Caco-2 (cell line): ENCODE measurements at regions of chr11 and their contacts with region 1.

Region 1: GRCh38 chr11:118689851-118690552 is 10.6 kb upstream of the TREH start:
- DNase-seq: peak; percentile 92 to 96
- H3K4me3 ChIP-seq: peak overlapping the region; percentile 25
- H3K4me3 Mint-ChIP-seq: peak overlapping the region; percentile 74
- H3K27ac Mint-ChIP-seq: peak overlapping the region; percentile 80
- H3K4me1 ChIP-seq: peaks cover 14% of the 10 kb centered on the region
- H3K4me1 Mint-ChIP-seq: peaks cover 23% of the 10 kb centered on the region
- H3K27me3 ChIP-seq: no peaks in the 10 kb centered on the region
- H3K27me3 Mint-ChIP-seq: no peaks in the 10 kb centered on the region
- CTCF ChIP-seq: peak; percentile 88 to 100

Region 2: GRCh38 chr11:118522571-118523072 is 167.4 kb before region 1 on chr11:
- CTCF ChIA-PET with region 1: no interaction called
- POLR2A ChIA-PET with region 1: no interaction called
- intact Hi-C with region 1: no loop called
- DNase-seq: peak; percentile 75 to 81
- H3K4me3 ChIP-seq: no peak overlapping the region
- H3K4me3 Mint-ChIP-seq: no peak overlapping the region
- H3K27ac Mint-ChIP-seq: peak overlapping the region; percentile 26
- H3K4me1 ChIP-seq: 0 out of 2 replicates have a peak, but pooled peaks cover 5% of the 10 kb centered on the region
- H3K4me1 Mint-ChIP-seq: peaks cover 7% of the 10 kb centered on the region
- H3K27me3 ChIP-seq: no peaks in the 10 kb centered on the region
- H3K27me3 Mint-ChIP-seq: no peaks in the 10 kb centered on the region
- CTCF ChIP-seq: peak; percentile 87 to 90

Region 3: DNA sequence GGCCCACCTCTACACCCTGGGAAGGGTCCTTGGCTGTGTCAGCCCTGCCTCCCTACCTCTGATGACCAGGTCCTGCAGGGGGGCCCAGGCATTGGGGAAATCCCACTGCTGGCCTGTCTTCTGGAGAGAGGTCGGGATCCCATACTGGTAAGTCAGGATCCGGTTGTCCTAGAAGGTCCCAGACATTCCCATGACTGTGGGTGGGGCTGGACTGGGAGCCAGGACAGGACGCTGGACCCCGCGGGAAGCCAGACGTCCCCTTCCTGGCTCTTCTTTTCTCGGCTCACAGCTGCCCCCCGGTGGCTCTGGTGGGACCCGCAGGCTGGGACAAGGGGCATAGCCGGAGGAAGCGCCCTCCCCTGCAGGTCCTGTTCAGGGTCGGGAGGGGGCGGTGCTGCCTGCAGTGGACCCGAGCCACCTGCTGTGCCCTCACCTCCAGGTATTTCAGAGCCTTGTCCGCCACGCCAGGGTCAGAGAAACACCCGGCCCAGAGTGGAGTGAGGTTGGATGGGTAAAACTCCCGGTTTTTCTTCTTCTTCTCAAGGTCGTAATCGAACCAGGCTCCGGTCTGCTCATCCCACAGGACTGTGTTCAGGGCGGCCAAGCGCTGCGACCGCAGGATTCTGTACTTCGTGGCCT is 30.6 kb before region 1 on chr11:
- CTCF ChIA-PET with region 1: interaction called, 14 read pairs
- POLR2A ChIA-PET with region 1: no interaction called
- intact Hi-C with region 1: no loop called
- DNase-seq: peak; percentile 97 to 99
- H3K4me3 ChIP-seq: no peak overlapping the region
- H3K4me3 Mint-ChIP-seq: no peak overlapping the region
- H3K27ac Mint-ChIP-seq: peak overlapping the region; percentile 43
- H3K4me1 ChIP-seq: peaks cover 37% of the 10 kb centered on the region
- H3K4me1 Mint-ChIP-seq: peaks cover 11% of the 10 kb centered on the region
- H3K27me3 ChIP-seq: no peaks in the 10 kb centered on the region
- H3K27me3 Mint-ChIP-seq: no peaks in the 10 kb centered on the region
- CTCF ChIP-seq: peak; percentile 100

Region 4: DNA sequence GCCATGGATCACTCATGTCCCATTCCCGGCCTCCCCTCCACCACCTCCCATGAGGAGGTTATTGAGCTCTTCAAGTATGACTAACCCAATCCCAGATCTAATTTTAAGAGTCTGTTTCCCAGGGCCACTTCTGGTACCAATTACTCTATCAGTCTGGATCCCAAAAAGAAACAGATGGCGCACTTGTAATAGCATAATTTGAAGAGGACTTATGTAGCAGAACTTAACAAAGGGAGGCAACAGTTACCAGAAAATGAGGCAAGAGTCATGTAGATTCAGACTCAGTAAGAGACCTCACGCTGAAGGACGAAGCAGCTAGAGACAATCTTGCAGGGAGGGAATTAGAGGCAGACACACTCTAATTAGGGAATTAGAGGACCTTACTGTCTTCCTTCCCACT is 54.0 kb after region 1 on chr11:
- CTCF ChIA-PET with region 1: interaction called, 4 read pairs
- POLR2A ChIA-PET with region 1: interaction called, 5 read pairs
- intact Hi-C with region 1: loop called (anchors 5 kb)
- DNase-seq: no peak
- H3K4me3 ChIP-seq: no peak overlapping the region
- H3K4me3 Mint-ChIP-seq: no peak overlapping the region
- H3K27ac Mint-ChIP-seq: no peak overlapping the region
- H3K4me1 ChIP-seq: peaks cover 23% of the 10 kb centered on the region
- H3K4me1 Mint-ChIP-seq: peaks cover 8% of the 10 kb centered on the region
- H3K27me3 ChIP-seq: no peaks in the 10 kb centered on the region
- H3K27me3 Mint-ChIP-seq: no peaks in the 10 kb centered on the region
- CTCF ChIP-seq: no peak

Region 5: GRCh38 chr11:118845369-118845768 is 155.4 kb after region 1 on chr11:
- CTCF ChIA-PET with region 1: interaction called, 10 read pairs
- POLR2A ChIA-PET with region 1: no interaction called
- intact Hi-C with region 1: no loop called
- DNase-seq: no peak
- H3K4me3 ChIP-seq: no peak overlapping the region
- H3K4me3 Mint-ChIP-seq: peak overlapping the region; percentile 17
- H3K27ac Mint-ChIP-seq: peak overlapping the region; percentile 69
- H3K4me1 ChIP-seq: peaks cover 16% of the 10 kb centered on the region
- H3K4me1 Mint-ChIP-seq: peaks cover 23% of the 10 kb centered on the region
- H3K27me3 ChIP-seq: no peaks in the 10 kb centered on the region
- H3K27me3 Mint-ChIP-seq: no peaks in the 10 kb centered on the region
- CTCF ChIP-seq: no peak

Region 6: DNA sequence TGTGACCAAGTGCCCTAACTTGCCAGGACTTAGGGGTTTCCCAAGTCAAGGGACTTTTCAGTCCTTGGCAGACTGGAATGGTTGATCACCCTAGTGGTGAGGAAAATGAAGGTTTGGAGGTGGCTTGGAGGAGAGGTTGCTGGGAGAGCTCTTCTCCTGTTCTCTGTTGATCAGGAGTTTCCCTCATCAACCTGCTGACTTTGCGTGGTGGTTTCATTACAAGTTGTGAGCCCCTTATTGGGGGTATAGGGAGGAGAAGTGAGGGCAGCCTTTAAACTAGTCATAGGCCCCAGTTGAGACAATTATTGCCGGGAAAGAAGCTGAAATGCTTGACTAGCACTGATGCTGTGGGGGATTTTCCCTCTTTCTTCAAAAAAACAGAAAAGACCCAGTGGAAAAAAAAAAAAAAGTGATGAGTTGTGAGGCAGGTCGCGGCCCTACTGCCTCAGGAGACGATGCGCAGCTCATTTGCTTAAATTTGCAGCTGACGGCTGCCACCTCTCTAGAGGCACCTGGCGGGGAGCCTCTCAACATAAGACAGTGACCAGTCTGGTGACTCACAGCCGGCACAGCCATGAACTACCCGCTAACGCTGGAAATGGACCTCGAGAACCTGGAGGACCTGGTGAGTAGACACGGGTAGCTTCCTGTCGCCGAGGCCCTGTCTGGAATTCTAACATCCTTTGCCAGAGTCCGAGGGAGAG is 193.5 kb after region 1 on chr11 and contains the start of gene CXCR5:
- CTCF ChIA-PET with region 1: no interaction called
- POLR2A ChIA-PET with region 1: no interaction called
- intact Hi-C with region 1: no loop called
- DNase-seq: no peak
- H3K4me3 ChIP-seq: no peak within 1 kb of the TSS
- H3K4me3 Mint-ChIP-seq: no peak within 1 kb of the TSS
- H3K27ac Mint-ChIP-seq: no peak within 1 kb of the TSS
- H3K4me1 ChIP-seq: 0 out of 2 replicates have a peak, but pooled peaks cover 7% of the 10 kb centered on the region
- H3K4me1 Mint-ChIP-seq: no peaks in the 10 kb centered on the region
- H3K27me3 ChIP-seq: no peaks in the 10 kb centered on the region
- H3K27me3 Mint-ChIP-seq: no peaks in the 10 kb centered on the region
- CTCF ChIP-seq: no peak
- total RNA-seq, gene CXCR5: not detected in 2 replicates

Region 7: GRCh38 chr11:118907051-118908042 is 217.3 kb after region 1 on chr11:
- CTCF ChIA-PET with region 1: interaction called, 5 read pairs
- POLR2A ChIA-PET with region 1: no interaction called
- intact Hi-C with region 1: loop called (anchors 1 kb)
- DNase-seq: peak; percentile 94 to 98
- H3K4me3 ChIP-seq: no peak overlapping the region
- H3K4me3 Mint-ChIP-seq: peak overlapping the region; percentile 45
- H3K27ac Mint-ChIP-seq: peak overlapping the region; percentile 96
- H3K4me1 ChIP-seq: peaks cover 45% of the 10 kb centered on the region
- H3K4me1 Mint-ChIP-seq: peaks cover 35% of the 10 kb centered on the region
- H3K27me3 ChIP-seq: no peaks in the 10 kb centered on the region
- H3K27me3 Mint-ChIP-seq: no peaks in the 10 kb centered on the region
- CTCF ChIP-seq: peak; percentile 96 to 99